Right cardiac atrium (tissue), 5 donors: ENCODE measurements at regions of chr4 and their contacts with region 1.

Region 1: DNA sequence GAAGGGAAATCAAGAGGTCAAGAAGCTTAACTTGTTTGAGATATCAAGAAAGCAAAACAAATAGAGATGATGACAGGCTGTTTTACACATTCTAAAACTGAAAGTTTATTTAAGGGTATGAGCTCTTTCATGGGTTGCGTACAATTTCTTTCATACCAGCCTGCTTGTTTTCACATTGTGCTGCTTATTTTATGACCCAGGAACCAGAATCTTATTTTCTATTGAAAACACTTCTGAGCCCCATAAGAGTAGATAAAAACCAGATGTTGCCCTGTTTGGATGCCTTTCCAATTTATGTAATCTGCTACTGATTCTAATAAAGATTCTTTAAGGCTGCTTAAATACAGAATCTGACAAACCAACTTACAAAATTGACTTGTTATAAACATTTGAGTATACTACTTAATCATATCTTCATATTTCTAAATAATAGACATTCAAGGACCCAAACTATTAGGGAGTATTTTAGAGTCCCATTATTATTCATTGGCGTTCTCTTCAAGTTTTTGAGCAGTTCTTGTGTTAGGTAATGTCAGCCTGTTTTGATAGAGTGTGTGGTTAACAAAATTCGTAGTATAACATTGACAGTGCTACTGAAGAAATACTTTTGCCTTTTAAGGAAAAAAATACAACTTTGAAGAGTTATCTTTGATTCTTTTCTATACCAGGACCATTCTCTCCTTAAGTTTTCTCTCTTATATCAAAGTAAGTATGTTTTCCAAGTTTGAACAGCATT is 74.4 kb downstream of the PDLIM5 start:
- DNase-seq: no peak
- ATAC-seq: peak in 1 of 2 donors; percentile 45
- H3K4me3 ChIP-seq: peak overlapping the region; percentile 15
- H3K27ac ChIP-seq: no peak overlapping the region
- H3K4me1 ChIP-seq: peaks cover 8% of the 10 kb centered on the region
- H3K27me3 ChIP-seq: no peaks in the 10 kb centered on the region

Region 2: DNA sequence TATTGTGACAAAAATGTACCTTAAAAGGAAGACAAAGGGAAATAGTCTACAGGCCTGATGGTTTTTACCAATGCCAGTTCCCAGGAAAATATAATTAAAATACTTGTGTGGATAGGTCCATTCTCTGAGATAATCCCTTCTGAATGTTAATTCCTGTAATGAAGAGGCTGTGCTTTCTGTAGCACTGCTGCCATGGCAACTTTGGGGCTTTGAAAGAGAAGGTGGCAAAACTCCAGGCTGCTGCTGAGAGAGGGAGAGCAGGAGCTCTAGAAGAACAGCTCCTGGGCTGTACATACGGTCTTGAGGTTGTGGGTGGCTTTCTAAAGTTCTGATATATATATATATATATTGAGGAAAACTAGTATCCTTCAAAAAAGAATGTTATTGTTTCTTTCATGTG is 51.0 kb after region 1 on chr4:
- intact Hi-C with region 1: loop called in 1 of 4 experiments (anchors 10 kb)
- DNase-seq: peak; percentile 44 to 73 (median 52)
- ATAC-seq: peak; percentile 69 to 83
- H3K4me3 ChIP-seq: no peak overlapping the region
- H3K27ac ChIP-seq: no peak overlapping the region
- H3K4me1 ChIP-seq: peaks cover 3% of the 10 kb centered on the region
- H3K27me3 ChIP-seq: no peaks in the 10 kb centered on the region